ENCODE measurements at regions of chr13 and their contacts with region 1.

Region 1: GRCh38 chr13:101785858-101786257 is 333.4 kb downstream of the ITGBL1 start:
- DNase-seq: peak; percentile 16
- ATAC-seq: peak; percentile 59 to 68

Region 2: GRCh38 chr13:101916108-101916757 is 130.4 kb after region 1 on chr13:
- intact Hi-C with region 1: loop called (anchors 5 kb)
- DNase-seq: peak; percentile 42
- ATAC-seq: peak; percentile 71 to 74

Region 3: GRCh38 chr13:102555917-102556553 is 770.2 kb after region 1 on chr13:
- intact Hi-C with region 1: loop called in 1 of 2 experiments (anchors 5 kb)
- DNase-seq: no peak
- ATAC-seq: peak; percentile 30 to 47